Endothelial cell of umbilical vein (primary cell): ENCODE measurements at regions of chr5 and their contacts with region 1.

Region 1: GRCh38 chr5:87069974-87070624 is 197.6 kb upstream of the RASA1 start:
- DNase-seq: peak; percentile 72
- H3K4me3 ChIP-seq: no peak overlapping the region
- H3K27ac ChIP-seq: no peak overlapping the region
- H3K4me1 ChIP-seq: peaks cover 1% of the 10 kb centered on the region
- H3K27me3 ChIP-seq: no peaks in the 10 kb centered on the region
- CTCF ChIP-seq: peak; percentile 21 to 36
- POLR2A ChIP-seq: no peak

Region 2: DNA sequence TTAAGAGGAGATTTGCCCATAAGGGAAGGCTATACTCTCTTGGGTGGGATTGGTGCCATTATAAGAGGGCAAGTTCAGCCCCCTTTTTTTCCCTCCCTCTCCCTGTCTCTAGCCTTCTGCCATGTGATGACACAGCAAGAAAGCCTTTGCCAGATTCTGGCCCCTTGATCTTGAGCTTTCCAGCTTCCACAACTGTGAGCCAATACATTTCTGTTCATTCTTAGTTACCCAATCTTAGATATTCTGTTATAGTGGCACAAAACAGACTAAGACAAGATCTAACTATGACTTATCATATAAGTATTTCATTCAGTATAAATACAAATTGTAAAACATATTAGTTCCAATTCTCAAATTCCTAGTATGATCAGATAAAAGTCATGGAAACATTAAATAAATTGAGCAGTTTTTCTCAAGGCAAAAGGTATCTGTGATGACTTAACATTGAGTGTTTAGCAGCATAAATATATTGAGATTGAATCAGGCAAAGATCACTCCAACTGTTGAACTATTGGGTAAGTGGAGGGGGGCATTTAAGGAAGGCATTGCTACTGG is 176.0 kb before region 1 on chr5:
- CTCF ChIA-PET with region 1: no interaction called
- POLR2A ChIA-PET with region 1: no interaction called
- dilution Hi-C with region 1: no loop called
- intact Hi-C with region 1: no loop called
- DNase-seq: no peak
- H3K4me3 ChIP-seq: no peak overlapping the region
- H3K27ac ChIP-seq: no peak overlapping the region
- H3K4me1 ChIP-seq: no peaks in the 10 kb centered on the region
- H3K27me3 ChIP-seq: no peaks in the 10 kb centered on the region
- CTCF ChIP-seq: no peak
- POLR2A ChIP-seq: no peak

Region 3: GRCh38 chr5:87151547-87151946 is 81.4 kb after region 1 on chr5:
- CTCF ChIA-PET with region 1: interaction called, 24 read pairs
- POLR2A ChIA-PET with region 1: interaction called, 5 read pairs
- dilution Hi-C with region 1: no loop called
- intact Hi-C with region 1: loop called (anchors 2 kb)
- DNase-seq: peak; percentile 78
- H3K4me3 ChIP-seq: no peak overlapping the region
- H3K27ac ChIP-seq: peak overlapping the region; percentile 82
- H3K4me1 ChIP-seq: peaks cover 31% of the 10 kb centered on the region
- H3K27me3 ChIP-seq: no peaks in the 10 kb centered on the region
- CTCF ChIP-seq: no peak
- POLR2A ChIP-seq: no peak

Region 4: DNA sequence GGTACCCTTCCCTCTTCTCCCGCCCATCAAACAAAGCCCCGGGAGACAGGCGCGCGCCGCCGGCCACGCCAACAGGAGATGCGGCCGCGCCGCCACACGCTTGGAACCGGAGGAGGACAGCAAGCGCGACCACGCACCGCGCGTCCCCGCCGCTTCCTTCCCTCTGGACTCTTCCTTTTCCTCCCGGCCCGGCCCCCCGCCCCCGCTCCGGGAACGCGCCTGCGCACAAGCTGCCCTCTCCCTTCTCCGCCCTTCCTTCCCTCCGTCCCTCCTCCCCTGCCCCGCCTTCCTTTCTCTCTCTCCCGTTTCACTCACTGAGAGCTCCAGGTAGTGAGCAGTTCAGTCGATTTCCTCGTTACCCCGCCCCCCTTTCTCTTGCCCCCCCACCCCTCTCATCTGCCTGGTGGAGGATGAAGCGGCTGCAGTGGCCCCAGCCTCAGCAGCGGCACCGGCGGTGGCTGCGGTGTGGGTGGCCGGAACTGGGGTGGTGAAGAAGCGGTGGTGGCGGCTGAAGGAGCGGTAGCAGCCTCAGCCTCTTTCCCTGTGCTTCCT is 197.6 kb after region 1 on chr5 and contains the start of gene RASA1:
- CTCF ChIA-PET with region 1: interaction called, 36 read pairs
- POLR2A ChIA-PET with region 1: no interaction called
- dilution Hi-C with region 1: no loop called
- intact Hi-C with region 1: loop called (anchors 1 kb)
- DNase-seq: peak; percentile 92
- H3K4me3 ChIP-seq: peak within 1 kb of the TSS; percentile 89 to 92 (median 92)
- H3K27ac ChIP-seq: peak within 1 kb of the TSS; percentile 77
- H3K4me1 ChIP-seq: peaks cover 13% of the 10 kb centered on the region
- H3K27me3 ChIP-seq: peaks cover 0 to 2% of the 10 kb centered on the region in 2 experiments
- CTCF ChIP-seq: no peak
- POLR2A ChIP-seq: peak; percentile 99
- total RNA-seq, gene RASA1: 42.0 and 42.7 TPM in 2 replicates

Region 5: GRCh38 chr5:87347272-87347671 is 277.2 kb after region 1 on chr5:
- CTCF ChIA-PET with region 1: interaction called, 14 read pairs
- POLR2A ChIA-PET with region 1: no interaction called
- dilution Hi-C with region 1: no loop called
- intact Hi-C with region 1: no loop called
- DNase-seq: no peak
- H3K4me3 ChIP-seq: no peak overlapping the region
- H3K27ac ChIP-seq: no peak overlapping the region
- H3K4me1 ChIP-seq: no peaks in the 10 kb centered on the region
- H3K27me3 ChIP-seq: no peaks in the 10 kb centered on the region
- CTCF ChIP-seq: no peak
- POLR2A ChIP-seq: no peak

Region 6: DNA sequence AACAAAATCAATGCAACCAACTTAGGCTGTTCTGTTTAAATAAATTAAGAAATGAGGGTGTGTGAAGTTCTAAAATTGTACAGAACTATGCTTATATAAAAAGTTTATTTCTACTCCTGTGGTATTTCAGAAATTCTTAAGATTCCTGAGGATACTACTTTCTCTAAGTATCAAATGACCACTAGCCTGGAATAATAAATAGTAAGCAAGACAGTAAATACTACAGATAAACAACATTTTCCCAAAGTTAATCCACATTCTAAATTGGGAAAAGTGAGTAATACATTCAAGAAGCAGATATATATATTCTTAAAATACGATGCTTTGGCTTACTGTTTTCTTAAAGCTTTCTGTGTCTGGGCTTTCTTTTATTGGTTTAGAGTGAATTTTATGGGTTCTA is 313.1 kb after region 1 on chr5:
- CTCF ChIA-PET with region 1: interaction called, 18 read pairs
- POLR2A ChIA-PET with region 1: no interaction called
- dilution Hi-C with region 1: no loop called
- intact Hi-C with region 1: no loop called
- DNase-seq: no peak
- H3K4me3 ChIP-seq: no peak overlapping the region
- H3K27ac ChIP-seq: no peak overlapping the region
- H3K4me1 ChIP-seq: no peaks in the 10 kb centered on the region
- H3K27me3 ChIP-seq: no peaks in the 10 kb centered on the region
- CTCF ChIP-seq: no peak
- POLR2A ChIP-seq: no peak